ENCODE measurements at regions of chr6 and their contacts with region 1.

Region 1: DNA sequence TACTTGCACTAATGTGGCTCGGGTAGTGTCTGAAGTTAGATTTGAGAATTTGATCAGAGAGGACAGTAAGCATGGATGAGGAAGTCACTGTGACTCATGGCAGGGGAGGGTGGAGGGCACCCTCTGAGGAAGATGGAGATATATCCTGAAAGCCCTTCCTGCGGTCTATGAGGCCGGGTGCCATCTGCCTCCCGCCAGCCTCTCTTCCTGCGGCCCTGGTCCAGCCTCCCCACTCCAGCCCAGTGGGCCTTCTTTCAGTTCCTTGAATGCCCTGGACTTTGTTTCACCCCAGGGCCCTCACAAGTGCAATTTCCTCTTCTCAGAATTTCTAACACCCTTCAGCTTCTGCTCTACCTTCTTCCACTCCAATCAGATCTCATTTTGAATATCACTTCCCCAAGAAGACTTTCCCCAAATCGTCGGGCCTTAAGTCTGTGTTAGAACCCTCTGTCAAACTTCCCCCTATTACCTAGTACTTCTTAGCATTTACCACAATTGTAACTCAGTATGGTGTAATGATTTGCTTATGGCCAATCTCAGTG is 20.2 kb upstream of the TNFAIP3 start:
- DNase-seq: no peak
- ATAC-seq: no peak
- H3K4me3 ChIP-seq: no peak overlapping the region
- H3K27ac ChIP-seq: no peak overlapping the region
- H3K4me1 ChIP-seq: peaks cover 24% of the 10 kb centered on the region
- H3K27me3 ChIP-seq: no peaks in the 10 kb centered on the region
- CTCF ChIP-seq: no peak
- POLR2A ChIP-seq: no peak
- RAD21 ChIP-seq: no peak

Region 2: GRCh38 chr6:137860394-137861005 is 13.7 kb after region 1 on chr6:
- CTCF ChIA-PET with region 1: no interaction called
- POLR2A ChIA-PET with region 1: no interaction called
- dilution Hi-C with region 1: no loop called
- in situ Hi-C with region 1: no loop called
- intact Hi-C with region 1: no loop called
- DNase-seq: no peak
- ATAC-seq: no peak
- H3K4me3 ChIP-seq: no peak overlapping the region
- H3K27ac ChIP-seq: no peak overlapping the region
- H3K4me1 ChIP-seq: no peaks in the 10 kb centered on the region
- H3K27me3 ChIP-seq: no peaks in the 10 kb centered on the region
- CTCF ChIP-seq: no peak
- POLR2A ChIP-seq: no peak
- RAD21 ChIP-seq: no peak

Region 3: GRCh38 chr6:138188278-138188941 is 341.6 kb after region 1 on chr6:
- CTCF ChIA-PET with region 1: no interaction called
- POLR2A ChIA-PET with region 1: no interaction called
- dilution Hi-C with region 1: no loop called
- in situ Hi-C with region 1: no loop called
- intact Hi-C with region 1: no loop called
- DNase-seq: no peak
- ATAC-seq: no peak
- H3K4me3 ChIP-seq: no peak overlapping the region
- H3K27ac ChIP-seq: no peak overlapping the region
- H3K4me1 ChIP-seq: no peaks in the 10 kb centered on the region
- H3K27me3 ChIP-seq: peaks cover 25% of the 10 kb centered on the region
- CTCF ChIP-seq: no peak
- POLR2A ChIP-seq: no peak
- RAD21 ChIP-seq: no peak

Region 4: GRCh38 chr6:138403801-138404661 is 557.2 kb after region 1 on chr6 and contains the start of gene HEBP2:
- CTCF ChIA-PET with region 1: no interaction called
- POLR2A ChIA-PET with region 1: no interaction called
- dilution Hi-C with region 1: no loop called
- in situ Hi-C with region 1: loop called (anchors 25 kb)
- intact Hi-C with region 1: no loop called
- DNase-seq: peak; percentile 65
- ATAC-seq: peak; percentile 88
- H3K4me3 ChIP-seq: peak within 1 kb of the TSS; percentile 79
- H3K27ac ChIP-seq: peak within 1 kb of the TSS; percentile 68
- H3K4me1 ChIP-seq: peaks cover 3% of the 10 kb centered on the region
- H3K27me3 ChIP-seq: no peaks in the 10 kb centered on the region
- CTCF ChIP-seq: peak; percentile 50
- POLR2A ChIP-seq: no peak
- RAD21 ChIP-seq: peak; percentile 33
- total RNA-seq, gene HEBP2: 3.9 and 5.6 TPM in 2 replicates

Measured in IMR-90 (cell line).